ENCODE measurements at regions of chr1 and their contacts with region 1.

Region 1: DNA sequence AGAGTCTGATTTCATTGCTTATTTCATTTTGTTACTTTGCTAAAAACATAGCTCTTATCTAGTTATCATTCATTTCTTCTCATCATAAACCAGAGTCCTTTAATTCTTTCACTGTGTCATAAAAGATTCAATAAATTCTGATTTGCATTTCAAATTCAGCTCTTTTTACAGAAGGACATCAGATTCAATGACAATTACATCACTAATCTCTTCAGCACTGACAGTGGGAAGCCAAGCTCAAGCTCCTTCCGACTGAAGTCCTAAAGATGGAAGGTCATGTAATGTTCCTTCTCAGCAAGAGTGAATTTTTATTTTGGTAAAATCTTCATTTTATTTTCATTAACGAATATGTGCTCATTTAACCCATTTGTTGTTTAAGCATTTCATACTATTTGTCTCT is 530.7 kb upstream of the ADGRL2 start:
- DNase-seq: no peak
- H3K4me3 ChIP-seq: no peak overlapping the region
- H3K27ac ChIP-seq: no peak overlapping the region
- H3K27me3 ChIP-seq: no peaks in the 10 kb centered on the region
- CTCF ChIP-seq: no peak

Region 2: GRCh38 chr1:79353224-79353623 is 1916.8 kb before region 1 on chr1:
- CTCF ChIA-PET with region 1: no interaction called
- POLR2A ChIA-PET with region 1: no interaction called
- DNase-seq: peak; percentile 11
- H3K4me3 ChIP-seq: no peak overlapping the region
- H3K27ac ChIP-seq: no peak overlapping the region
- H3K27me3 ChIP-seq: no peaks in the 10 kb centered on the region
- CTCF ChIP-seq: peak; percentile 55

Region 3: DNA sequence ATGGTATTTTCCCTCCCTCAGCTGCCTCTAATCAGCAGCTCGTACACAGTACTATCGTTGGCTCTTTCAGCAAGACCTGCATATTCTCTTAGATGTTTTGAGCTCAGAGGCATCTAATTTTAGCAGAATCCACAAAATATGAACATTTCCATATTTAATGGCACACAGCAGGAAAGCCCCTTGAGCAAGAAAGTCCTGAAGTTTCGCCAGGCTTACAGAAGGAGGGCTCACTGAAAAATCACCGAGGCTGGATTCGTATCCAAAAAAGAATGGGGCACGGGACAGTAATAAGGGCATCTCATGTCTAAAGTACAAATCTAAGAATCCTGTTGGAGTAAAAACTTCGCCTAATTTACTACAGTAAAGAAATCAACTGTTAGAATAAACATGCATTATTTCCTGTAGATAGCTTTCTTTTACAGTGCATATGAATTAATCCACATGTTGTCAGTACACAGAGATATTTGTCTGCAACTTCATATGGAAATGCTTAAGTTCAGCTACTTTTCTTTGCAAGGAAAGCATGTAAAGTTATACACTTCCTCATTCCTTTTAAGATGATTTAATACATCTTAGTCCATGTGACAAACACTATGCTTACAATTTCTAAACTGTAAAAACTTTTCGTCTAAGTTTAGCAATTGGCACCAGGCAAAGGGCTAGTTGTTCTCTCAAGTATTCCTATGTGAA is 1058.2 kb before region 1 on chr1:
- CTCF ChIA-PET with region 1: interaction called, 11 read pairs
- POLR2A ChIA-PET with region 1: no interaction called
- DNase-seq: no peak
- H3K4me3 ChIP-seq: no peak overlapping the region
- H3K27ac ChIP-seq: no peak overlapping the region
- H3K27me3 ChIP-seq: no peaks in the 10 kb centered on the region
- CTCF ChIP-seq: no peak

Region 4: DNA sequence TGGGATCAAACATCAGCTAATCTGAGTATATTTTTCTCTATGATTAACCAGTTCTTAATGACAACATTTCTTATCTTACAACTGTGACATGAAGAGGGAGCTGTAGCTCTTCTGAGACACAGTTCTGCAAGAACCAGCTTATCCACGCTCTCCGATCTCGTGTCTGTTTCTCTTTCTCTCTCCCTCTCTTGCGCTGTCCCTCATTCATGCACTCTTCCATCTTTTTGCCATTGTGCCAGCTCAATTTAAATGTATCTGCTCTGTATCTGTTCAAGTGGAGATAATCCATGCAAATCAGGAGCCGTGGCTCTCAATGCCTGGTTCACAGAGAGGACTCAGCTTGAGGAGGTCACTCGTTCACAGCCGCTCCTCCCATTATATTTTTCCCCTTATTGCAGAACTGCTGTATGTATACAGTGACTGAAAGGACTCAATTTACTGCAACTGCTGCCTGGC is 36.0 kb after region 1 on chr1:
- CTCF ChIA-PET with region 1: no interaction called
- POLR2A ChIA-PET with region 1: no interaction called
- DNase-seq: peak; percentile 21
- H3K4me3 ChIP-seq: peak overlapping the region; percentile 61
- H3K27ac ChIP-seq: no peak overlapping the region
- H3K27me3 ChIP-seq: no peaks in the 10 kb centered on the region
- CTCF ChIP-seq: peak; percentile 45

Region 5: DNA sequence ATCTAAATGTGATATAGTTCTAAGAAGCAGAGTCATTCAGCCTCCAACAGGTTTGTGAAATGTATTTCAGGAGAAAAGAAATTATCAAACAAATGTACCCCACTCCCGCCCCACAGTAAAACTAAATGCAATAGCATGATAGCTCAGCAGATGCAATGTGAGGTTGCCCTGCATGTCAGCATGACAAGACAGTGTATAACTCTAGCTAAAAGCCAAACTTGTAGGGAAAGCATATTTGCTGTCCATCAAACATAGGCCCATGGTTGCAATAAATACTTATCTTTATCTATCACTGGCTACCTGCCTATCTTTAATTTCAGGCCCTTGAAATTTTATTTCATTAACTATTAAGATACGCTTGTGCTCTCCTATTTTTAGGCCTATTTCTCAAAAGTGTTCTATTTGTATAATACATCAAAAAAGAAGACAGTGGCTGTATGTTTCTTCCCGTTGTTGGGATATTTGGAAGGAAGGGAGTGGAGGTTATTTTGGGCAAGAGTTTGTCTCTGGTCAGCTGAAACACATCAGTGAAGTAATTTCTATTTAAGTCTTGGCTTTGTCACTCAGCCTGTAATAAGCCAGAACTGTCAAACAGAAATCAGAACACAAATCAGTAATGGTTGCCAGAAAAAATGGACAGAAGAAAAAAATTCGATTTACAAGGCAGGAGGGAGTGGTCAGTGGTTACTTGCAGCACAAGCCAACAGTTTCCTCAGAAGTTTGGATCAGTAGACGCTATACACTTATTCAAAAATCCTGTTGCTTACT is 223.2 kb after region 1 on chr1:
- CTCF ChIA-PET with region 1: no interaction called
- POLR2A ChIA-PET with region 1: no interaction called
- DNase-seq: no peak
- H3K4me3 ChIP-seq: no peak overlapping the region
- H3K27ac ChIP-seq: no peak overlapping the region
- H3K27me3 ChIP-seq: no peaks in the 10 kb centered on the region
- CTCF ChIP-seq: no peak

Measured in AG04450 (cell line).